Sciatic nerve (tissue), 2 donors: ENCODE measurements at regions of chr5 and their contacts with region 1.

Region 1: GRCh38 chr5:55021410-55021809 is 2.6 kb upstream of the GZMK start:
- DNase-seq: no peak
- ATAC-seq: peak; percentile 97

Region 2: GRCh38 chr5:54480296-54480695 is 541.1 kb before region 1 on chr5:
- intact Hi-C with region 1: no loop called
- DNase-seq: no peak
- ATAC-seq: no peak

Region 3: DNA sequence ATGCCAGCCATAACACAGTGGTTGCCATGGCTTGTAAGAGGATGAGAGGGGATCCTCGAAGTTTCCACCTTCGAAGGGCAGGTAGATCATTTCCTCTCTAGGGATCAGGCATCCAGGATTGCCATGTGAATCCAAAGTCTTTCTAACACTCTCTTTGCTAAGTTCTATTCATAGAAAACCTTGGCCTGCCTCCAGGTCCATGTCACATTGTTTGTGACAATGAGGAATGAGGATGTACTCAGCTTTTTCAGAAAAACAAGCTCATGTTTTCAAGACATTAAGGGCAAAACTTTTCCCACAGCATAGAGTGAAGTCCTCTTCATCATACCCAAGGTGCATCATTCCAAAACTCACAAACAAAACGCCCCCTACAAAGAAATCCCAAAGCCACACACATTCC is 55.6 kb before region 1 on chr5:
- intact Hi-C with region 1: loop called (anchors 2 kb)
- DNase-seq: no peak
- ATAC-seq: no peak

Region 4: DNA sequence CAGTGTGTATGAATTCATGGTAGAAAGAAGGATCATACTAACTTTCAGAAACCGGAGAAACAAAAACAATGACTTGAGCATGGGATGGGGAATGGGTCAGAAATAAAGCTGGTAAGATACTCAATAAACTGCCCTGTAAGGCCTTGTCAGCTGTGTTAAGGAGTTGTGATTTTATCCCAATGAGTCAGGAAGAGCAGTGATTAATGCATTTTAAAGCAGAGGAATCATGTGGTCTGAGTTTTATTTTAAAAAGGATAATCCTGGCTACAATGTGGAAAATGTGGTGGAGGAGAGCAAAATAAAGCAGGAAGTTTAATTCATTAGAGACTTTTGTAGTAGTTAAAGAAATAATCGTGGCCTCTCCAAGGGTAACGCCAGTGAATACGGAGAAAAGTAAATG is 257.4 kb after region 1 on chr5:
- intact Hi-C with region 1: no loop called
- DNase-seq: no peak
- ATAC-seq: no peak